Gastrocnemius medialis (tissue), 4 donors: ENCODE measurements at regions of chr3 and their contacts with region 1.

Region 1: DNA sequence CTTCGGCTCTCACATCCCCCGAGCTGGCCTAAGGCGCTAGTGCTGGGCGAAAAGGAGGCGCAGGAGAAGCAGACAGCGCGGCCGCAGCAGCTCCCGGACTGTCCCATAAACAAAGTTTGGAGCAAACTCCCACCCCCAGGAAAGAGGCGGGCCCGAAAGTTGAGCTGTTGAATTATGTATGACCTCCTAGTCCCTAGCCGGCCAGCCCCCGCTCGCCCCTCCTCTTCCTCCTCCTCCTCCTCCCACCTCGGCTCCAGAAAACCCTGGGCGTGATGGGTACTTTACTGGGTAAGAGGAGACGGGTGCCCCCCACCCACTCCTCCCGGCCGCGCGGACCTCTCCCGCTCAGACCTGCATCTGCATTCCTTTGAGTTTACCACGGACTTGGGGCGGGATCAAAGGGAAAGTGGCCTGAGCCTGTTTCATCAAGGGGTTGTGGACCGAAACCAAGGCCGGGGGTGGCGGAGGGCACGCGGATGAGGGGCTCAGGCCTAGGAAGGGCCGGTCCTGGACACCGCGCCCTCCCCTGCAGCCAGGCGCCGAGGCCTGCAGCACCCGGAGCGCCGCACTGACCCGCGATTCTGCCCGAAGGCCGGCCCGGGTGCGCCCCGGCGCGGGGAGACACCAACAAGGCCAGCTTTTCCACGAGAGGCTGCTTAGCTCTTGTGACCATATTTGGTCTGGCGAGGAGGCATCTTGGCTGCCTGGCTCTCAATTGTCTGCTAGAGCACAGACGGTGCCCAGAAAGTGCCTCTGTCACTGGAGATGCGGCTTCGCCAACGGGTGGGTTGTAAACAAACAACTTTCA is at the start of gene WWTR1:
- DNase-seq: peak; percentile 88 to 93
- ATAC-seq: peak; percentile 86 to 88
- H3K4me3 ChIP-seq: peak within 1 kb of the TSS; percentile 75 to 93 (median 86)
- H3K27ac ChIP-seq: peak within 1 kb of the TSS; percentile 93 to 96 (median 96)
- H3K4me1 ChIP-seq: peaks cover 36 to 38% of the 10 kb centered on the region in 2 donors
- H3K27me3 ChIP-seq: no peaks in the 10 kb centered on the region
- CTCF ChIP-seq: peak in 2 of 5 experiments; percentile 19 to 23
- POLR2A ChIP-seq: peak; percentile 87 to 97
- total RNA-seq, gene WWTR1: 11.3 to 30.7 (median 17.6) TPM

Region 2: GRCh38 chr3:149572796-149573414 is 85.2 kb before region 1 on chr3:
- in situ Hi-C with region 1: no loop called
- intact Hi-C with region 1: loop called (anchors 1 kb)
- DNase-seq: no peak
- ATAC-seq: no peak
- H3K4me3 ChIP-seq: no peak overlapping the region
- H3K27ac ChIP-seq: peak overlapping the region in 3 of 4 donors; percentile 21 to 68 (median 27)
- H3K4me1 ChIP-seq: peaks cover 58 to 69% of the 10 kb centered on the region in 2 donors
- H3K27me3 ChIP-seq: no peaks in the 10 kb centered on the region
- CTCF ChIP-seq: no peak
- POLR2A ChIP-seq: no peak

Region 3: DNA sequence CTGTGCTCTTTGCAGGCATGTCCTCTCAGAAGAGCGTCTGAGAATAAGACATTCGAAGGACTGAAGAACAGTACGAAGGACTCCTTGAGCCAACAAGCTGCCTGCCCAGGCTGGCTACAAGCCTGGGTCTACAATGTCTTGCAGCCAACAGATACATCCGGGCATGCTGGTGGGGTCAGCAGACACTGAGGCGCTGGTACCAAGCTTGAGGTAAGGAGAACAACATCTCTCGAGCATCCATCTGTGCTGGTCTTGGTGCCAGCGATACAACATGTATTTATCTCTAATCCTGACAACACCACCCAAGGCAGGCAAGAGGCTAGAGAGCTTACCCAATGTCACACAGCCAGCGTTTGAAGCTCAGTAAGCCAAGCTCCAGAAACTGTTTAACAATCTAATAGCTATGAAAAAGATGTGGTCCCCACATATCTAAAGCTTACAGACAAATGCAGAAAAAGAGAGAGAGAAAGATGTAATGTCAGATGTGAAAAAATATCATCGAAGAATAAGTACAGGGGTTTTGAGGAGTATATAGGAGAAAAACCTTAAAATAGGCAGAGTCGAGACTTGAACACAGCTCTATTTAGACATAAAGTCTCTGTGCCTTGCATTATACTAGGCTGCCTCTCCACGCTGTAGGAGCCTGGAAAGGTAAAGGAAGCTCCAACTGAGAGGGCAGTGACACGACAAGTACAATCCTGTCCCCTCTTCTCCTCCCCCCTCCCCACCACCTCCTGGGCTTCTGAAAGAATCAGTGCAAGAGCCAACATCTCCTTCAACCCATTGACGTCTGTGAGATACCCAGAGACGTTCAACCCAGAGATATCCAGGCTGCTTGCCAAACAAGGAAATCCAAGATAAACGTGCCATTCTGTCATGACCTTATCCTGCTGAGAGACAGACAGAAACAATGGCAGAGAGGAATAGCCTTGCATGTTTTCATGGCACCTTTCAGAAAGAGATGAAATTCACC is 39.7 kb before region 1 on chr3:
- in situ Hi-C with region 1: no loop called
- intact Hi-C with region 1: loop called (anchors 5 kb)
- DNase-seq: no peak
- ATAC-seq: no peak
- H3K4me3 ChIP-seq: no peak overlapping the region
- H3K27ac ChIP-seq: peak overlapping the region in 3 of 4 donors; percentile 3 to 39 (median 28)
- H3K4me1 ChIP-seq: peaks cover 14 to 34% of the 10 kb centered on the region in 2 donors
- H3K27me3 ChIP-seq: no peaks in the 10 kb centered on the region
- CTCF ChIP-seq: no peak
- POLR2A ChIP-seq: no peak

Region 4: GRCh38 chr3:149752051-149752787 is 94.1 kb after region 1 on chr3 and contains the start of gene COMMD2:
- in situ Hi-C with region 1: no loop called
- intact Hi-C with region 1: loop called (anchors 5 kb)
- DNase-seq: peak; percentile 30 to 65
- ATAC-seq: peak; percentile 94 to 98
- H3K4me3 ChIP-seq: peak within 1 kb of the TSS; percentile 90 to 98 (median 92)
- H3K27ac ChIP-seq: peak within 1 kb of the TSS; percentile 80 to 88 (median 84)
- H3K4me1 ChIP-seq: peaks cover 7 to 9% of the 10 kb centered on the region in 2 donors
- H3K27me3 ChIP-seq: no peaks in the 10 kb centered on the region
- CTCF ChIP-seq: peak; percentile 22 to 42 (median 35)
- POLR2A ChIP-seq: peak in 1 of 2 donors; percentile 49
- total RNA-seq, gene COMMD2: 7.9 to 10.0 (median 8.6) TPM

Region 5: GRCh38 chr3:150268426-150269391 is 610.6 kb after region 1 on chr3:
- in situ Hi-C with region 1: no loop called
- intact Hi-C with region 1: no loop called
- DNase-seq: no peak
- ATAC-seq: no peak
- H3K4me3 ChIP-seq: no peak overlapping the region
- H3K27ac ChIP-seq: no peak overlapping the region
- H3K4me1 ChIP-seq: no peaks in the 10 kb centered on the region
- H3K27me3 ChIP-seq: no peaks in the 10 kb centered on the region
- CTCF ChIP-seq: no peak
- POLR2A ChIP-seq: no peak

Region 6: DNA sequence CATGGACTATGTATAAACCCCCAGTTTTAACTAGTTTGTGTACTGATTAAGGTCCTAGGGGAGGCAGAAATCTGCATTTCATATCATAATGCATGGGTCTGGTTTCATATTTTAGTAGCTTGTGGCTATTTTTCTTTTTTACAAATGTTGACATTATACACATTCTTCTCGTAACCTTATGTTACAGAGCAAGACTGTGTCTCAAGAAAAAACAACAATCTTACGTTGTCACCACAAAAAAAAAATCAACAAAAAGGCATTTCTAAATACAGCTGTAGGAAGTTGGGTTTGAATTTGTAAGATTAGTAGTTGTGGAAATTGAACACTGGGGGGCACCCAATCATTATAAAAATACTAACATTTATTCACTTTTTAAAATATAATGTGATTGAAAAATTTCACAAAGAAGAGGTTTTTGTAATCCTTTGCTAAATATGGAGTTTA is 870.2 kb after region 1 on chr3:
- in situ Hi-C with region 1: no loop called
- intact Hi-C with region 1: no loop called
- DNase-seq: no peak
- ATAC-seq: no peak
- H3K4me3 ChIP-seq: no peak overlapping the region
- H3K27ac ChIP-seq: no peak overlapping the region
- H3K4me1 ChIP-seq: no peaks in the 10 kb centered on the region
- H3K27me3 ChIP-seq: no peaks in the 10 kb centered on the region
- CTCF ChIP-seq: peak in 1 of 5 experiments; percentile 22
- POLR2A ChIP-seq: no peak